Vagina (tissue), 2 donors: ENCODE measurements at regions of chr3 and their contacts with region 1.

Region 1: DNA sequence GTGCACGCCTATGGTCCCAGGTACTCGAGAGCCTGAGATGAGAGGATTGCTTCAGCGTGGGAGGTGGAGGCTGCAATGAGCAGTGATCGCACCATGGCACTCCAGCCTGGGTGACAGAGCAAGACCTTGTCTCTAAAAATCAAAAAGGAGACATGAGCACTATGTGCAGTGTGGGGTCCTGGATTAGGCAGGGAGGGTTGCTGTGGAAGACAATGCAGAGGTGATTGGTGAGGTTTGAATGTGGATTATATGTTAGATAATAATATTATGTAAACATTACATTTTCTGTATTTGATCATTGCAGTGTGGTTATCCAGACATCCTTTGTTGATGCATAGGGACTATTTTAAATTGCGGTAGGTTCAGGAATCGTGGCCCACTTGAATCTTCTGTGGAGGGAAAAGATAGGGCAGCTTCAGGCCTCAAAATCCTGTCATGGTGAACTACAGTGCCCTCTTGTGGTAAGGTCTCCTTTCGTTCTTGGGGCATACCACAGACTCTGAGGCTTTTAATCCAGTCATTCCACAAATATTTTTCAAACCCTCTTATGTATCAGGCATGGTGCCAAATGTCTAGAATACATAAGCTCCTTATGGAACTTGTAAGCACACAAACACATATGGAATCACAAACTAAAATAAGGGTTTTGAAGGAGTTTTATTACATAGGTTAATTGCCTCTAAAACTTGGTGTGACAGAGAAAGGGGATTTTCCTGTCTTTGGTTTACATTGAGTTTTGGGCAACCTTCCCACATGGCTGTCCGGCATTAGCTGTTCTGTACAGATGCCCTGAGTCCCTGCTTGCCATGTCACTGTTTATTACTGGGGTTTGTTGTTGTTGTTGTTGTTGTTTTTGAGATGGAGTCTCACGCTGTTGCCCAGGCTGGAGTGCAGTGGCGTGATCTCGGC is 37.7 kb downstream of the GPD1L start:
- DNase-seq: no peak
- H3K4me3 ChIP-seq: no peak overlapping the region
- H3K27ac ChIP-seq: no peak overlapping the region
- H3K4me1 ChIP-seq: no peaks in the 10 kb centered on the region
- H3K27me3 ChIP-seq: no peaks in the 10 kb centered on the region
- CTCF ChIP-seq: peak; percentile 63 to 84 (median 81)
- POLR2A ChIP-seq: no peak

Region 2: GRCh38 chr3:32018757-32019564 is 125.1 kb before region 1 on chr3:
- intact Hi-C with region 1: loop called (anchors 2 kb)
- DNase-seq: no peak
- H3K4me3 ChIP-seq: no peak overlapping the region
- H3K27ac ChIP-seq: no peak overlapping the region
- H3K4me1 ChIP-seq: no peaks in the 10 kb centered on the region
- H3K27me3 ChIP-seq: no peaks in the 10 kb centered on the region
- CTCF ChIP-seq: peak; percentile 53 to 82 (median 73)
- POLR2A ChIP-seq: no peak

Region 3: GRCh38 chr3:32194653-32195052 is 50.5 kb after region 1 on chr3:
- intact Hi-C with region 1: no loop called
- DNase-seq: no peak
- H3K4me3 ChIP-seq: no peak overlapping the region
- H3K27ac ChIP-seq: no peak overlapping the region
- H3K4me1 ChIP-seq: no peaks in the 10 kb centered on the region
- H3K27me3 ChIP-seq: no peaks in the 10 kb centered on the region
- CTCF ChIP-seq: no peak
- POLR2A ChIP-seq: no peak